GM13976 (cell line): ENCODE measurements at regions of chr16 and their contacts with region 1.

Region 1: DNA sequence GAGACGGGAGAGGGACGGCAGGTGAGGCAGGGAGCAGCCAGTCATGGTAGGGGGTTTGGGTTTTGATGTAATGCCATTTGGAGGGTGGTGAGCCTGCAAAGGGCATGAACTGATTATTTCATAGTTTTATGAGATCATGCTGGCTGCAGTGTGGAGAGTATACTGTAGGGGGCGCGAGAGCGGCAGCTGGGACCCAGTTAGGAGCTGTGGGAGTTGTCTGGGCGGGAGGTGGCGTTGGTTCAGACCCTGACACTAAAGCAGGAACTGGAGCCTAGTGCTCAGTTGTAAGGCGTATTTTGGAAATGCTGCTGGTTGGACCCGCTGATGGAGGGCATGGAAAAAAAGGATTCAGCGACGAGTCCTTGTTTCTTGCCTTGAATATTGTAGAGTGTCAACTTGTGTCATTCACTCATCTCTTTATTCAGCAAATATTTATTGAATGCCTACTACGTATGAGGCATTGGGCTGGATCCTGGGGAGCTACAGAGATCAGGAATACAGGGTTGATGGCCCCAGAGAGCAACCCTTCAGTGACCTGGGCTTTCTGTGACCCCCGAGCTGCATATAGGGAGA is 23.7 kb upstream of the KDM8 start:
- DNase-seq: peak; percentile 87
- CTCF ChIP-seq: peak; percentile 94

Region 2: DNA sequence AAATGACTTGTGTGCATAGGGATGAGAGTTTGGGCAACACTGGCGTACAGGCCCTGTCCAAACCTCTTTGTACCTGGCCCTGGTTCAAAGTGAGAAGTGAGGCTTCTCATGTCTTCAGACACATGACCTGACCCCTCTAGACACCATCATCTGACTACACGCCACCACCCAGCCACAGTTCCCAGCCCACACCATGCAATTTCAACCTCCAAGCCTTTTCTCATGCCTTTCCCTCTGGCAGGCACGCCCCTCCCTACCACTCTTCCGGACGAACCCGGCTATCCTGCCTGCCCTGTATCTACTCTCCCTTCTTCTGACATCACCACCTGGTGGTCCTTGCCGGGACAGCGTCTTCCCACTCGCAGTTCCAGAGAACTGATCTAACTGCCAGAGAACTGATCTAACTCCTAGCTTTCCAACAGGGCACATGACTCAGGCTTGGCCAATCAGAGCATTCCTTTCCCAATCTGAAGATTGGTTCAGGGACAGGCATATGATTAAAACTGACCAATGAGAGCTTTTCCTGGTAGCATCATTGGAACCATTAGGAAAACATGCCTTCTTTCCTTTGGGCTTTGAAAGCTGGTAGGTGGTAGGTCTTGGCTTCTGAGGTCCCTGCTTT is 195.3 kb after region 1 on chr16:
- in situ Hi-C with region 1: loop called (anchors 10 kb)
- DNase-seq: peak; percentile 76
- CTCF ChIP-seq: no peak